A549 (cell line): ENCODE measurements at regions of chr2 and their contacts with region 1.

Region 1: GRCh38 chr2:32063310-32064161 is at the start of gene SPAST:
- DNase-seq: peak; percentile 99 to 100
- ATAC-seq: peak; percentile 96 to 98
- H3K4me3 ChIP-seq: peak within 1 kb of the TSS; percentile 76
- H3K27ac ChIP-seq: peak within 1 kb of the TSS; percentile 85 to 92
- H3K4me1 ChIP-seq: peaks cover 18% of the 10 kb centered on the region
- CTCF ChIP-seq: peak; percentile 32
- EP300 ChIP-seq: no peak
- POLR2A ChIP-seq: peak; percentile 81
- RAD21 ChIP-seq: peak; percentile 21 to 22; a peak in 3 of 5 replicates
- polyA plus RNA-seq, gene SPAST: 31.1 and 36.3 TPM in 2 replicates

Region 2: DNA sequence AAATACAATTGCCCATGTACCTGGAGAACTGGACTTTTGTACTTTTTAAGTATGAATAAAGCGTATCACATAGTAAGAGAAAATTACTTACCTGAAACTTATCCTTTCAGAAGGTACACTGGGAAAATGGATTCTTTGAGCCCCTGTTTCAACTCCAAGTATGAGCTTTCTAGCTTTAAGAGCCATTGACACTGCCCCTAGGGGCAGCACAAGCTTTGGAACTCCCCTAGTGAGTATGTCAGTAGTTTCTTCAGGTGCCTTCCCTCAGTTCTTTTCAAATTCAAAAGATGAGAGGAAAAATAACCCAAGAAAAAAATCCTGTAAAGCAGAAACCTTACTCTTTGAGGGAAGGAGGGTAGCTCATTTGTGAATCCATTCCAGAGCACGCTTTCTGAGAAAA is 176.8 kb before region 1 on chr2:
- CTCF ChIA-PET with region 1: no interaction called
- POLR2A ChIA-PET with region 1: no interaction called
- DNase-seq: peak; percentile 6 to 52
- ATAC-seq: peak; percentile 86 to 94
- H3K4me3 ChIP-seq: no peak overlapping the region
- H3K27ac ChIP-seq: no peak overlapping the region
- H3K4me1 ChIP-seq: no peaks in the 10 kb centered on the region; the same call in 2 of the 3 replicates
- CTCF ChIP-seq: peak; percentile 40
- EP300 ChIP-seq: no peak
- POLR2A ChIP-seq: no peak
- RAD21 ChIP-seq: peak; percentile 38 to 48; a peak in 3 of 5 replicates

Region 3: GRCh38 chr2:31979956-31980355 is 83.6 kb before region 1 on chr2:
- CTCF ChIA-PET with region 1: no interaction called
- POLR2A ChIA-PET with region 1: no interaction called
- DNase-seq: no peak
- ATAC-seq: no peak
- H3K4me3 ChIP-seq: no peak overlapping the region
- H3K27ac ChIP-seq: no peak overlapping the region
- H3K4me1 ChIP-seq: peaks cover 26% of the 10 kb centered on the region
- CTCF ChIP-seq: no peak
- EP300 ChIP-seq: no peak
- POLR2A ChIP-seq: no peak
- RAD21 ChIP-seq: no peak

Region 4: GRCh38 chr2:32074134-32074506 is 10.6 kb after region 1 on chr2:
- CTCF ChIA-PET with region 1: interaction called, 7 read pairs
- POLR2A ChIA-PET with region 1: interaction called, 11 read pairs
- DNase-seq: no peak
- ATAC-seq: no peak; a peak in 1 of 6 replicates
- H3K4me3 ChIP-seq: no peak overlapping the region
- H3K27ac ChIP-seq: no peak overlapping the region
- H3K4me1 ChIP-seq: no peaks in the 10 kb centered on the region
- CTCF ChIP-seq: no peak
- EP300 ChIP-seq: no peak
- POLR2A ChIP-seq: no peak
- RAD21 ChIP-seq: no peak

Region 5: GRCh38 chr2:32166115-32166574 is 102.6 kb after region 1 on chr2:
- CTCF ChIA-PET with region 1: no interaction called
- POLR2A ChIA-PET with region 1: interaction called, 53 read pairs
- DNase-seq: no peak
- ATAC-seq: no peak
- H3K4me3 ChIP-seq: peak overlapping the region; percentile 75
- H3K27ac ChIP-seq: peak overlapping the region; percentile 82 to 89
- H3K4me1 ChIP-seq: peaks cover 8% of the 10 kb centered on the region
- CTCF ChIP-seq: no peak
- EP300 ChIP-seq: no peak
- POLR2A ChIP-seq: no peak
- RAD21 ChIP-seq: no peak